Activated CD4-positive, alpha-beta T cell treated with anti-CD3 and anti-CD28 coated beads, Interleukin-2, amount 10 ng/mL, durations not matched to agents 7 days and 5 days (primary cell): ENCODE measurements at regions of chr1 and their contacts with region 1.

Region 1: DNA sequence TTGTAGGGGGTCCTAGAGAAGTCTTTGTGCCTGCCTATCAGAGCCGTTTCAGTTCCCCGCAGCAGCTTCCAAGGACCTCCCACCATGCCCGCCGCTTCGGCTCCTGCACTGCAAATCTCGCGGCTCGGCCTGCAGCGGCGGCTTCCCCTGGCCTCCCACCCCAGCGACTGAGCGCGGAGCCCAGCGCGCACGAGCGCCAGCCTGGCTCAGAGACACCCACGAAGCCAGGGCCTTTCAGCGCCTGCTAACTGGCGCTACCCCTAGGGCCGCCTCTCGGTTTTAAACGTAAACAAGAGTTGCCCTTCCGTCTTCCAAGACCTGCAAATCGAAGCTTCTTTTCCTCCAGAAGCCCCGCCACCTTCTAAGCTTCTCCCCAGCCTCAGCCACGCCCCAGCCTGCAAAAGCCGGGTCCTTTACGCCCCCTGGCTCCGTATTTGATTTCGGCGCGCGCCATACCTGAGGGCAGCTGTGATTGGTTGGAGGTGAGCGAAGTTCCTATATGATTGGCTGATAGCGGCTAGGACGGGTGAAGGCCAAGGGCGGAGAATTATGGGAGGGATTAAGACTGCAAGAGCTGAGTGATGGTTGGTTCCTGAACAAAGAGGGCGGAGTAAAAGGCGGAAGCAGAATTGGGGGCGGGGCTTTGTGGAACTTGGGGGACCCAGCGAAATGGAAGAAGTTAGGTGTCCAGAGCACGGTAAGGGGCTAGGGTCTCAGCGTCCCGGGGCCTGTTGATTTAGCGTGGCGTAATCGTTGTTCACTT is at the start of gene TTF2:
- DNase-seq: peak; percentile 99
- H3K4me3 Mint-ChIP-seq: no peak within 1 kb of the TSS
- H3K27ac Mint-ChIP-seq: no peak within 1 kb of the TSS
- H3K4me1 Mint-ChIP-seq: peaks cover 61% of the 10 kb centered on the region
- H3K27me3 Mint-ChIP-seq: no peaks in the 10 kb centered on the region
- total RNA-seq, gene TTF2: 123 to 133 TPM

Region 2: DNA sequence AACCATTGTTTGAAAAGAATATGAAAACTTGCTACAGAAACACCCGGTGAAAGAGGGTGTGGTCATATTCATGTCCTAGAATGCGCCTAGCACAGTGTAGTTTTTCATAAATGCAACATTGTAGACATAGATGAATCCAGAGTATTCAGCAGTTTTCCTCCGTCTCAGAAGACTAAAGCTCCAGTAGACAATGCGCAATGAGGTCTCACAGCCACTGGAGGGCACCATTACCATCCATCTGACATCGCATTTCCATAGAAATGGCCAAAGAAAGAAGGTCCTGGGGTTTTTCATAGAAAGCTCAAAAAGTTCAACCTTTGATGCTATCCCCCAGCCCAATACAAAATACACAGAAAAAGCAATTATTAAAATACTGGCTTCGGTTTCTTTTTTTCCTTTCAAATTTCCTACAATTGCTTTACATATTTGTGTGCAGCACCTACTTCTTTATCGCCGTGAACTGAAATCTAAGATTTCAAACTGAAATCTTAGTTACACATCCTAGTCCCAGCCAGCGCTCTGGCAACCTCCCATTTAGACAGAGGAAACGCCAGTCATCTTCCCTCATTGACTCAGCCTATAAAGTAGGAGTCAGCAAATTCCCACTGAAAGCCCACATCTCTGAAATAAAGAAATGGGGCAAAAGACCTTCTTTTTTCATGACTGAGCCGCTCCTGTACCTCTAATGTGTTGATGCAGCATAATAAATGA is 485.1 kb before region 1 on chr1:
- CTCF ChIA-PET with region 1: interaction called, 14 read pairs
- POLR2A ChIA-PET with region 1: no interaction called
- DNase-seq: peak; percentile 66
- H3K4me3 Mint-ChIP-seq: no peak overlapping the region
- H3K27ac Mint-ChIP-seq: no peak overlapping the region
- H3K4me1 Mint-ChIP-seq: peaks cover 30% of the 10 kb centered on the region
- H3K27me3 Mint-ChIP-seq: peaks cover 5% of the 10 kb centered on the region